ENCODE measurements at regions of chr2 and their contacts with region 1.

Region 1: DNA sequence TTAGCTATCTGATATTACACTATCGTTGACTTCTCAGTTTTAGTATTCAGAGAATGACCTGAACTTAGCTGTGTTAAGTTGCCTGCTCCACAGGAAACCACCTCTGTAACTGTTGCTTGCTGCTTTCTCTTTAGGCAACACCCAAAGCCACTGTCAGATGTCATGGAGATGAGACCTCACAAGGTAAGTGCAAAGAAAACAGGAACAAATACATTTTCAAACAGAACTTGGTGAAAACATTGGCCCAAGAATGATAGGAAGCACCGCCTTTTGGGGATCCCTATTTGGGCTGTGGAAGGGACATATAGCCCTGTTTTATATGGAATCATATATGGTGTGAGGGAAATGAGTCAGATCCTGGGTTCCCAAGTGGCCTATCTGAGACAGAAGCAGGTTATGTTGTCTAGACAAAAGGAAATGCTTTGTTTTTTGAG is 143.4 kb downstream of the UBE2E3 start:
- DNase-seq: peak; percentile 73
- H3K4me3 Mint-ChIP-seq: peak overlapping the region; percentile 78
- H3K27ac Mint-ChIP-seq: peak overlapping the region; percentile 95
- H3K4me1 Mint-ChIP-seq: peaks cover 74% of the 10 kb centered on the region
- H3K27me3 Mint-ChIP-seq: no peaks in the 10 kb centered on the region

Region 2: GRCh38 chr2:181142514-181142913 is 18.7 kb after region 1 on chr2:
- intact Hi-C with region 1: loop called (anchors 1 kb)
- DNase-seq: no peak
- H3K4me3 Mint-ChIP-seq: peak overlapping the region; percentile 84
- H3K27ac Mint-ChIP-seq: peak overlapping the region; percentile 95
- H3K4me1 Mint-ChIP-seq: peaks cover 70% of the 10 kb centered on the region
- H3K27me3 Mint-ChIP-seq: no peaks in the 10 kb centered on the region

Region 3: DNA sequence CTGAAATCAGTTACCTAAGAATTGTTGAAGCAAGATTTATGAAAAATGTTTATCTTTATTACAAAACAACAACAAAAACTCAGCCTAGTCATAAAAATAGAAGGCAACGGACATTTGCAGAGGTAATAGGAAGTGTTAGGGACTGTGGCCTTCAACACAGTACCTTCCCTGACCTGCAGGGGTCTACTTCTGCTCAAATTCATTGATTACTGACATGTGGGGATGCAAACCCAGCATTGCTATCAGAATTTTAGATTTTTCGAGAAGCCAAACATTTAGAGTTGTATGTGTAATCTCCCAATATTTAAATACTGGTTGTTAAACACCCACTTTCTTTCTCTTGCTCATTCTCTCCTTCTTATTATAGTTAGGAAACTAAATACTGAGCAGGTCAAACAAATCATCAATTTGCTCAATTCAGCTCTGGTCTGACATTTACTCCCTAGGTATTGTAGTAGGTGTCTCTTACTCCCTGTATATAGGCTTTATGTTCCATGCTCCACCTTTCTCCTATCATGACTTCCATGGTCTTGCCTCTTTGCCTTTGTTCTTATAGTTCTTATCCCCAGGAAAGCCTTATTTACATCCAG is 55.1 kb after region 1 on chr2:
- intact Hi-C with region 1: loop called (anchors 1 kb)
- DNase-seq: no peak
- H3K4me3 Mint-ChIP-seq: peak overlapping the region; percentile 7
- H3K27ac Mint-ChIP-seq: peak overlapping the region; percentile 57
- H3K4me1 Mint-ChIP-seq: peaks cover 56% of the 10 kb centered on the region
- H3K27me3 Mint-ChIP-seq: no peaks in the 10 kb centered on the region

Region 4: DNA sequence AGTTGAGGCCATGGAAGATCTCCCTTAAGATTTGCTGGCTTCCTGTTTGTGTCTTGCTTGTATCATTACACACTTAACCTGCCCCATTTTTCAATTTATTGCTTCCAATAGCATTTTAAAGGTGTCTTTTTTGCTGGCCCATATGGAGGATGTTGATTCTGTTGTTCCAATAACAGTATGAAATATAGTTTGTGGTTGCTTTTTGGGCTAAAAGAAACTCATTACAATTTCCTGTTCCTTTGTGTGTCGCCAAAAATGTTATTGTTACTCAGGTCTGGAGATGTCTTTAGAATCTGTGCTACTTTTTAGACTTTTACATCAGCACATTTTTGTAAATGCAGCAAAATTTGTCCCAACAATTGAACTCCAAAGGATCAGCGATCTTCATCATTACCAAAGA is 99.4 kb after region 1 on chr2:
- intact Hi-C with region 1: loop called (anchors 5 kb)
- DNase-seq: no peak
- H3K4me3 Mint-ChIP-seq: peak overlapping the region; percentile 34
- H3K27ac Mint-ChIP-seq: peak overlapping the region; percentile 93
- H3K4me1 Mint-ChIP-seq: peaks cover 31% of the 10 kb centered on the region
- H3K27me3 Mint-ChIP-seq: no peaks in the 10 kb centered on the region

Region 5: DNA sequence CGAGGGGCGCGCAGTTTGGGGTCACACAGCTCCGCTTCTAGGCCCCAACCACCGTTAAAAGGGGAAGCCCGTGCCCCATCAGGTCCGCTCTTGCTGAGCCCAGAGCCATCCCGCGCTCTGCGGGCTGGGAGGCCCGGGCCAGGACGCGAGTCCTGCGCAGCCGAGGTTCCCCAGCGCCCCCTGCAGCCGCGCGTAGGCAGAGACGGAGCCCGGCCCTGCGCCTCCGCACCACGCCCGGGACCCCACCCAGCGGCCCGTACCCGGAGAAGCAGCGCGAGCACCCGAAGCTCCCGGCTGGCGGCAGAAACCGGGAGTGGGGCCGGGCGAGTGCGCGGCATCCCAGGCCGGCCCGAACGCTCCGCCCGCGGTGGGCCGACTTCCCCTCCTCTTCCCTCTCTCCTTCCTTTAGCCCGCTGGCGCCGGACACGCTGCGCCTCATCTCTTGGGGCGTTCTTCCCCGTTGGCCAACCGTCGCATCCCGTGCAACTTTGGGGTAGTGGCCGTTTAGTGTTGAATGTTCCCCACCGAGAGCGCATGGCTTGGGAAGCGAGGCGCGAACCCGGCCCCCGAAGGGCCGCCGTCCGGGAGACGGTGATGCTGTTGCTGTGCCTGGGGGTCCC is 333.4 kb after region 1 on chr2 and contains the start of gene ITGA4:
- intact Hi-C with region 1: loop called (anchors 1 kb)
- DNase-seq: peak; percentile 85
- H3K4me3 Mint-ChIP-seq: peak within 1 kb of the TSS; percentile 98
- H3K27ac Mint-ChIP-seq: peak within 1 kb of the TSS; percentile 96
- H3K4me1 Mint-ChIP-seq: peaks cover 75% of the 10 kb centered on the region
- H3K27me3 Mint-ChIP-seq: no peaks in the 10 kb centered on the region
- total RNA-seq, gene ITGA4: 98.5 and 118 TPM in 2 replicates

Measured in activated T-helper 1 cell treated with anti-CD3 and anti-CD28 coated beads, Interleukin-12 subunit alpha, Interleukin-12 subunit beta, Interleukin-2, Interleukin-4 antibody, amounts not matched to agents 30 ng/mL and 10 ng/mL and 1 ng/mL, durations not matched to agents 14 hours and 24 hours and 36 hours (primary cell).